IMR-90 (cell line): ENCODE measurements at regions of chr10 and their contacts with region 1.

Region 1: DNA sequence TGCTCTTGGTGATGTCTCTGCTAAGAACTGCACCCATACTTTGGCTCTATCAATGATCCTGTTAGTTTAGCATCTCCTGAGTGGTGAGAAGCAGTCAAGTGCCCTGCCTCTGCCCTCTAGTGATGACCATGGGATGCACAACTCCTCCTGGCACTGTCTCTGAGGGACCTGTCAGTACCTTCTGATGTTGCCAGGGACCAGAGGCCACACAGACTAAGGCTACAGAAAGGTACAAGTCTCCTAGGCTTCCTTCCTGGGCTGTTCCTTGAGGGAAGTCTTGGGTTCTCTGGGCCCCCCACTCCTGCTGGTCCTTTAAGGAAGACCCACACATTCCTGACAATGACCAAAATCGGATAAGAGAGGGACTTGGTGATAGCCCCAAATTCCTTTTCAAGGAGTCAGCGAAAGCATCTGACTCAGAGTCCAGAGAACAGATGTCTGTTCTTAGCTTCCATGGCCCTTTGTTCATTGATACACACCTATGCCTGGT is 15.3 kb downstream of the NKX2-3 start:
- DNase-seq: peak; percentile 8
- ATAC-seq: peak; percentile 74
- H3K4me3 ChIP-seq: no peak overlapping the region
- H3K27ac ChIP-seq: no peak overlapping the region
- H3K4me1 ChIP-seq: no peaks in the 10 kb centered on the region
- H3K27me3 ChIP-seq: peaks cover 46% of the 10 kb centered on the region
- CTCF ChIP-seq: 0 out of 2 replicates have a peak, but pooled peaks have one; percentile 32
- POLR2A ChIP-seq: no peak
- RAD21 ChIP-seq: peak; percentile 37

Region 2: DNA sequence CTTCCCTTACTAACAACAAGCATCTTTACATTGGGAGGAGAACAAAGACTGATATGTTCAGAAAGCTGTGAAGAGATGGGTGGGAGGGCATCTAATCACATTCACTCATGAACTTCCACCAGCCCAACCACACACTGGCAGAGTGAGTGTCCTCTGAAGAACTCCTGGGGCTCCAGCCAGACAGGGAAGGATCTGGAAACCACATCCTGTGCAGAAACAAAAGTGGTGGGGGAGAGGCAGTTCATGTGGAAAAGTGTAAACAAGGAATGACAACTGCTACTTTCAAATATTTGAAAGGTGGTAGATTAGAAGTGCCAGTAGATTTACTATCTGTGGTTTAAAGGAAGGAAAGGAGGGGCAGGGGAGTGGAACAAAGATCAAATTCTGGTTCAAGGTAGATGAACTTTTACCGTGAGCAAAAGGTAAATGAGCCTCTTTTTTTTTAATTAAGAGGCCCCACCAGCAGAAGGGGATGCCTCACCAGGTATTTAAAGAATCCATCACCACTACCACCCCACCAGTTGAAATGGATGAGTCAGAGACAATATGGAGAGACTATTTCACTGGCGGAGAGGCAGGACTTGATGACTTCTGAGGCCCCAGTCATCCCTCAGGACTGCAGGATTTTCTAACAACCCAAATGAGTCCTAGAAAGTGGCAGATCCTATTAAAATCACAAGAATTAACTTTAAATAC is 152.2 kb before region 1 on chr10:
- CTCF ChIA-PET with region 1: no interaction called
- POLR2A ChIA-PET with region 1: no interaction called
- dilution Hi-C with region 1: no loop called
- in situ Hi-C with region 1: no loop called
- intact Hi-C with region 1: loop called (anchors 5 kb)
- DNase-seq: peak; percentile 83
- ATAC-seq: peak; percentile 69
- H3K4me3 ChIP-seq: no peak overlapping the region
- H3K27ac ChIP-seq: peak overlapping the region; percentile 7; the same call in 1 of the 2 replicates
- H3K4me1 ChIP-seq: peaks cover 12% of the 10 kb centered on the region
- H3K27me3 ChIP-seq: no peaks in the 10 kb centered on the region; the same call in 1 of the 2 replicates
- CTCF ChIP-seq: no peak
- POLR2A ChIP-seq: no peak
- RAD21 ChIP-seq: no peak

Region 3: GRCh38 chr10:99435986-99436638 is 112.0 kb before region 1 on chr10:
- CTCF ChIA-PET with region 1: interaction called, 4 read pairs
- POLR2A ChIA-PET with region 1: no interaction called
- dilution Hi-C with region 1: no loop called
- in situ Hi-C with region 1: no loop called
- intact Hi-C with region 1: loop called (anchors 1 kb)
- DNase-seq: peak; percentile 59
- ATAC-seq: peak; percentile 87
- H3K4me3 ChIP-seq: no peak overlapping the region
- H3K27ac ChIP-seq: no peak overlapping the region
- H3K4me1 ChIP-seq: no peaks in the 10 kb centered on the region
- H3K27me3 ChIP-seq: no peaks in the 10 kb centered on the region
- CTCF ChIP-seq: peak; percentile 66
- POLR2A ChIP-seq: no peak
- RAD21 ChIP-seq: peak; percentile 70

Region 4: DNA sequence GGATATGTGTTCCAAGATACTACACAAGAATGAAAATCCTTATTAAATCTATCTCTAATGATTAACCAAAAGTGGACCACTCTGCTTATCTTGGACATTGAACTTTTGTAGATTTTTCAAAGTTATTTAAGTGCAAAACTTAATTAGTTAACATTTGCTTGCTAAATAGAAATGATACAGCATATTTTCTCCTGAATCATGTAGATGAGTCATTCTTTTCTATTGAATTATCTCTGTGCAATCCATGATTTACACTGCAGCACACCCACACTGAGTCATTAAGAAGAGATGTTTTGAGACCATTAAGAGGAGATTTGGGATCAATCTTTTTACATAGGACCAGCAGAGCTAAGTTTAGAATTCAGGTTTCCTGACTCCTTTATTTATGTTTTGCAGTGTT is 227.8 kb after region 1 on chr10:
- CTCF ChIA-PET with region 1: no interaction called
- POLR2A ChIA-PET with region 1: interaction called, 18 read pairs
- dilution Hi-C with region 1: no loop called
- in situ Hi-C with region 1: no loop called
- intact Hi-C with region 1: no loop called
- DNase-seq: peak; percentile 93
- ATAC-seq: peak; percentile 55
- H3K4me3 ChIP-seq: no peak overlapping the region
- H3K27ac ChIP-seq: peak overlapping the region; percentile 95; the same call in 1 of the 2 replicates
- H3K4me1 ChIP-seq: peaks cover 8% of the 10 kb centered on the region
- H3K27me3 ChIP-seq: no peaks in the 10 kb centered on the region
- CTCF ChIP-seq: no peak
- POLR2A ChIP-seq: no peak
- RAD21 ChIP-seq: no peak